ENCODE measurements at regions of chr15 and their contacts with region 1.

Region 1: DNA sequence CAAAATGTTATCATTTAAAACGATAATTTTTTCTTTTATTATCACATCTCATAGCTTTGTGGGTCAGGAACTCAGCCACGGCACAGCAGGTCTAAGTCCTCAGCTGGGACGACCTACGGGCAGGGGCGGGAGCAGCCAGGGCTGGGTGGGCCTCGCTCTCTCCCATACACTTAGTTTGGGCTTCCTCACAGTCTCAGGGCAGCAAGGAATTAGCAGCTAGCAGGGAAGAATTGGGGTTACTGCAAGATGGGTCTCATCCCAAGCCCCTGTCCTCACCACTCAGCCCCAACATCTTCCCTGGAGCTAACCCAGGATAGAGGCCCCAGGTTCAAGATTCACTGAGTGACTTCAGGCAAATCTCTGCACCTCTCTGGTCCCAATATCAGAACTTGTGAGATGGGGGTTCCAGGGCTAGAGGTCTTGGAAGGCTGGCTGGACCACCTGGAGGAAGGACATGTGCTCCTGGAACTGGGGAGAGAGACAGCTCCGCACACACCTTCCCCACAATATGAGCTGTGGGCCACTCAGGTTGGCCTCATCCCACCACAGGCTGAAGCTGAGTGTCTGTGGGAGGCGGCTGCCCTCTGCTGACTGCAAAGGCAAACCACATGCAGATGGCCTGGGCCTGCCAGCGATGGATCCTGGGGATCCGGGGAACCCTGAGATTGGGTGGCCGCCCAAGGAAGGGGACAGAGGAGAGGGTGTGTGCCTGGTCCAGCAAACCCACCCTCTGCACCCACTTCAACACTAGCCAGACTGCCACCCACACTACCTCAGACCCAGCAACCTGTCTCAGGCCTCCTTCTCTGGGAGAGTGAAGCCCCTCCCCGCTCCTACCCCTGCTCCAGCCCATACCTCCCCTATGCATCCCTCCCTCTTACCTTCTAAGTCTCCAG is 45.0 kb downstream of the CYP11A1 start:
- DNase-seq: peak; percentile 84

Region 2: DNA sequence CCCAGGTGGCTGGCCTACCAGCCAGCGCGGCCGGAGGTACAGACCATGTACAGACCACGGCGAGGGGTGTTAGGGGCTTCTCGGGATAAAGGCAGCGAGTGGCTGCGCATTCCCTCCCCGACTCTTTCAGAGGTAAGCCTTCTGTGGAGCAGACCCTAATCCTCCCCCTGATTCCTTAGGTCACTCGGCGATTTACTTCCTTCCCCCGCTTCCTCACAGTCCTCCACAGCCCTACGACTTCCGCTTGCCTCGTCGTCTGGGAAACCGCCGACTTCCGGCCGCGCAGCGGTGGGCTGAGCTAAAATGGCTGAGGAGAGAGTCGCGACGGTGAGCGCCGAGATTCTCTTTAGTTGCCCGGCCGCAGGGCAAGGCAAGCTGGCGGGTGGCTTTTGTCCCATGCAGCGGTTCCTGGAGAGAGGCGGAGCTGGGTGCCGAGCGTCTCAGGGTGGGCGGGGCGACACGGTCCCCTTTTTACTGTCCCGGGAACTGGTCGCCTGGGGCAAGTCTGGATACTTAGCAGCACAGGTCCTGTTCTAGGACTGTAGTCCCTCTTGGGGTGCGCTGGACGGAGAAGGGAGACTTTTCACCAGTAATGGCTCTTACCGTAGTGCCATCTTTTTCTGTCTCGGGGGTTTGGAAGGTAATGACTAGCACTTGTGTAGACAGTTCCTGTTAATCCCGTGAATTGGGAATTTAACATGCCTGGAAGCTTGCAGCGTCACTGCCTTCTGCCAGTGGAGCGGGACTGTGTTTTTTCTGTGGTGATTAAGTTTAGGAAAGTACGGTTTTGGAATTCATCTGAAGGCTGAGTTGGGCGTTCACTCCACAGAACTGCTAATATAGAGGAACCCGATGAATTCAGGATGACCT is 1636.3 kb before region 1 on chr15 and contains the starts of genes BBS4 and HIGD2B:
- in situ Hi-C with region 1: loop called (anchors 25 kb)
- DNase-seq: peak; percentile 99

Region 3: DNA sequence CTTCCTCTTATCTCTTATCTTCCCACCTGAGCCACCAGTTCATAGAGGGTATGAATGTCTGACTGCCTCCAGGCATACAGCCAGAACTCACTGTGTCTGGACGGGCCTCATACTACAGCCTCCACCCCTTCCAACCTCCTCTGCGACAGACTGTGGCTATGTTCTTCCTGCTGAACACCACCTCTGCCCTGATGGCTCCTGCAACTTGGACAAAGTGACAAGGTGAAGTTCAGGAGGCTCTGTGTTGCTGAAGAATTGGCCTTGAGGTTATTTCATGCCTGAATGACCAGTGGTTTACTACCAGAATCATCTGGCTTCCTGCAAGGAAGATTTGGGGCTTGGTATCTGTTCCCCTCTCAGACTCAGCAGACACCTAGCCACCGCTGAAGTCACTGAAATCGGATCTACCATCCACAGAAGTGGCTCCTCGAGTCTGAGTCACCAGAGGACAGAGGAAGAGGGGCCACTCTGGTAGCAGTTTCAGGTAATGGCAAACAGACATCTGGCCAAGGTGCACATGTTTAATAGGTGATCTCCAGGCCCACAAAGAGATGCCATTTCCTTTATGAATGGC is 534.7 kb after region 1 on chr15:
- in situ Hi-C with region 1: no loop called
- DNase-seq: peak; percentile 76

Measured in KBM-7 (cell line).